OCI-LY7 (cell line): ENCODE measurements at regions of chr3 and their contacts with region 1.

Region 1: GRCh38 chr3:17195856-17196604 is 311.3 kb downstream of the PLCL2 start:
- DNase-seq: peak; percentile 86
- H3K4me3 ChIP-seq: peak overlapping the region; percentile 45
- H3K27ac ChIP-seq: peak overlapping the region; percentile 89
- H3K4me1 ChIP-seq: peaks cover 58% of the 10 kb centered on the region
- CTCF ChIP-seq: peak; percentile 81

Region 2: GRCh38 chr3:16842272-16843270 is 353.5 kb before region 1 on chr3:
- CTCF ChIA-PET with region 1: no interaction called
- POLR2A ChIA-PET with region 1: interaction called, 8 read pairs
- intact Hi-C with region 1: loop called (anchors 5 kb)
- DNase-seq: peak; percentile 73
- H3K4me3 ChIP-seq: peak overlapping the region; percentile 65
- H3K27ac ChIP-seq: peak overlapping the region; percentile 80
- H3K4me1 ChIP-seq: peaks cover 56% of the 10 kb centered on the region
- CTCF ChIP-seq: no peak

Region 3: DNA sequence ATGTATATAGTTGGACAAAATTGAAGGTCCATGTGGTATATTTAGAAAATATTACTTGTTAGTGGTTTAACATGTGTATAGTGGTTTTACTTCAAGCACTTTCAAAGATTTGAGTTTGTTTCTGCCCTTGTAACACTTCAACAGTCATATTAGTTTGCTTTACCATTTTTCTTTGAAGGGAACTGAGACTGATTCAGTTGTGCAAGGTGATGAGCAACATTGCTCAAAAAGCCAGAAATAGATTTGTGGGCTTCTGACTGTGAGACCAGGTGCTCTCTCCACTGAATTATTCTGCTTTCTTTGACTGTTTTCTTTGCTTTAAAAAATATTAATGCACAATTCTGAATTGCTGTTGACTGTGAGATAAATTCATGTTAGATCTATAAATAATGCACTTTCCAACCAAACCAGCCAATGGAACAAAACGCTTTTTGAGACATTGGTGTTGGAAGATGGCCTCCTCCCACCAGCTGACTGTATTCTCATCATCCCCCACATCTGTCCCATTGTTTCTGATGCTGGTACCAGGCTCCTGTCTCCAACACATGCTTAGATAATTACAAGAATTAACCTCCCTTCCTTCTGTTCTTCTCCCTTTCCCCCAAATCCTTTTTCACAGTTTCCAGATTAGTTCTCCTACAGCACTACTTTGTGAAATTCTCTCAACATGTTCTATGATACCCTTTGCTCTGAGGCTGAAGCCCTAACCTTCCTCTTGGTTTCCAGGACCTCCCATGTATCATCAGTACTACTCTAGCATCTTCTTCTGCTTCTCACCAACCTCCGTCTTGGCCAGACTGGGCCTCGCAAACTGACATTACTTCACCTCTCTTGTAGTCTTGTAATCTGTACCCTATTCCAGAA is 283.4 kb before region 1 on chr3:
- CTCF ChIA-PET with region 1: no interaction called
- POLR2A ChIA-PET with region 1: no interaction called
- intact Hi-C with region 1: loop called (anchors 5 kb)
- DNase-seq: peak; percentile 86
- H3K4me3 ChIP-seq: peak overlapping the region; percentile 52
- H3K27ac ChIP-seq: peak overlapping the region; percentile 98
- H3K4me1 ChIP-seq: peaks cover 90% of the 10 kb centered on the region
- CTCF ChIP-seq: no peak

Region 4: DNA sequence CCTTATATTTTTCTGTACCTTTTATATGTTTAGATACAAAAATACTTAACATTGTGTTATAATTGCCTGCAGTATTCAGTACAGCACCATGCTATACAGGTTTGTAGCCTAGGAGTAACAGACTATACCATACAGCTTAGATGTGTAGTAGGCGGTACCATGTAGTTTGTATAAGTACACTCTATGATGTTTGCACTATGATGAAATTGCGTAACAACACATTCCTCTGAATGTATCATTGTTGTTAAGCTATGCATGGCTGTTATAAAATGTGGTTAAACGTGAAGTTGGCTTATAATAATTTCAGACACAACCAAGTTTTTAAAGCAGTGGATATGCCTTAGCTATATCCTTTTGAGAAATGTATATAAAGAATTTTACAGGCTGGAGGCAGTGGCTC is 17.1 kb after region 1 on chr3:
- CTCF ChIA-PET with region 1: no interaction called
- POLR2A ChIA-PET with region 1: interaction called, 10 read pairs
- intact Hi-C with region 1: no loop called
- DNase-seq: no peak
- H3K4me3 ChIP-seq: no peak overlapping the region
- H3K27ac ChIP-seq: no peak overlapping the region
- H3K4me1 ChIP-seq: no peaks in the 10 kb centered on the region
- CTCF ChIP-seq: no peak

Region 5: DNA sequence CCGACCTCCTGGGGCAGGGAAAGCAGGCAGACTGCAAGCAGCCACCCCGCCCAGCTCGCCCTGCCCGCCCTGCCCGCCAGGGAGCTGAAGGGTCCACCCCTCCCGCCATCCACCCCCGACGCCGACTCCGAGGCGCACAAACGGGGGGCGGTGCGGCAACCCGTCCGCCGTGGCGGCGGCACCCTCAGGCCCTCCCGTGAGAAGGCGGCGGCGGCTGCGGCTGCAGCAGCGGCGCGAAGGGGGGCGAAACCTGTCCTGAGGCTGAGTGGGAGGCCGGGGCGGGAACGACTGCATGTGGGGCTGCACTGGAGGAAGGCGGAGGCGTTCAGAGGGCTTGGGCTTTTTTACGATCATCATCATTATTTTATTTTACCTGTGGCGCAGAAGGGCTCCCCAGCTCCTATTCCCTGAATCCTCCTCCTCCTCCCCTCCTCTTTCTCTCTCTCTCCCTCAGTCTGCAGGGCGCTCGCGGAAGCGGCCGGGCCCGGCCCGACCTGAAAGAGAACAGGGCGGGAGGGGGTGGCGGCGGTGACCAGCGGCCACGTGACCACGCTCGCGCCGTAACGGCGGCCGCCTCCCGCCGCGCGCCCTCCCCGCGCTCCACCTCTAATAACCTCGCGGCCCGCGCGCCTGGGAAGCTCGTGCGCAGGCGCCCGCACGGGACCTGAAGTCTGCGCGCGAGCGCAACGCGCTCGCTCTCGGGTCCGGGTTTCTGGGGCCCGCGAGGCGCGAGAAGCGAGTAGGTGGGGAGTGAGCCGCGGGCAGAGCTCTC is 546.3 kb after region 1 on chr3 and contains the start of gene TBC1D5:
- CTCF ChIA-PET with region 1: no interaction called
- POLR2A ChIA-PET with region 1: no interaction called
- intact Hi-C with region 1: loop called (anchors 2 kb)
- DNase-seq: peak; percentile 98
- H3K4me3 ChIP-seq: peak within 1 kb of the TSS; percentile 81
- H3K27ac ChIP-seq: peak within 1 kb of the TSS; percentile 91
- H3K4me1 ChIP-seq: peaks cover 57% of the 10 kb centered on the region
- CTCF ChIP-seq: no peak
- total RNA-seq, gene TBC1D5: 82.4 and 85.5 TPM in 2 replicates